Cardiac septum (tissue), 1 donor: ENCODE measurements at regions of chr6 and their contacts with region 1.

Region 1: GRCh38 chr6:81894788-81895271 is 142.3 kb upstream of the TENT5A start:
- DNase-seq: no peak

Region 2: DNA sequence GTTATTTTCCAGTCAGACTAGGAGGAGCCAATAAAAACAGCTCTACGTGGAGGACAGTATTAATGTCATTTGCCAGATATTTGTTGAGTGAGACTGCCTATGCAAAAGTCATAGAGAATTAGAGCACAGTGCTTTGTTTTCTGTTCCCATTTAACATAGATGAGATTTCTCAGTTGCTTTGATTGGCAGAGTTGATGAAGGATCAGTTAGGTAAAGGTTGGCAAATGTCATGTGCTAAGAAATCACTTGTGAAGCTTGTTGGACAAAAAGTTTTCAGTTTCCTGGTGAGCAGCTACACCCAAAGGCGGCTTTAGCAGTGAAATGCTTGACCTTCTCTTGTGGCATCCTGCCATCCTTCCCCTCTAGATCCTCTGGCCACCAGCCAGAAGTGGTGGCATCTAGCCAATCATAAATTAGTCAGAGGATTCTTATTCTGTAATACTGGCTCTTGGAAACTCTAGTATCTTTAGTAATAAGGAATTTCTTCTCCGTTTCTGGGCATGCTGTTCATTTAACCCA is 1751.4 kb before region 1 on chr6:
- intact Hi-C with region 1: no loop called
- DNase-seq: no peak

Region 3: GRCh38 chr6:81997091-81997926 is 102.5 kb after region 1 on chr6:
- intact Hi-C with region 1: loop called (anchors 5 kb)
- DNase-seq: no peak

Region 4: DNA sequence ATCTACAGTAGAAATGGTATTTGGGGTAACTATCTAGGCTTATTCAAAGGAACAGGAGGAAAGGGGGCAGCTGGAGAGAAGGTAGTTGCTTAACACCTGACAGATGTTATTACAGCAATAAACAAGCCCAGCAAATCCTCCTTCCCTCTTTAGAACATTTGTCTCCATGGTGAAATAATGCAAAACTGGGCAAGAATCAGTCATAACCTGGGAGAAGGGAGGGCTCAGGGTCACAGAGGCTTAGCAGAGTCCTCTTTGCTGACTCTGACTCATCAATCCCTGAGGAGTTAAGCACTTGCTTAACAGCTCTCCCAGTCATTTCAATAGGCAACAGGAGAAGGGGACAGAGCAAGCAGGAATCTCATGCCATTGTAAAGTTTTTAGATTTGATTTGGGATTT is 122.5 kb after region 1 on chr6:
- intact Hi-C with region 1: loop called (anchors 5 kb)
- DNase-seq: no peak